PC-3 (cell line): ENCODE measurements at regions of chr14 and their contacts with region 1.

Region 1: GRCh38 chr14:26598081-26598795 is 405 bp upstream of the NOVA1 start:
- DNase-seq: peak; percentile 77
- ATAC-seq: peak; percentile 82
- H3K4me3 ChIP-seq: peak overlapping the region; percentile 86
- H3K27ac ChIP-seq: no peak overlapping the region
- H3K4me1 ChIP-seq: no peaks in the 10 kb centered on the region
- H3K27me3 ChIP-seq: peaks cover 43% of the 10 kb centered on the region
- CTCF ChIP-seq: no peak

Region 2: DNA sequence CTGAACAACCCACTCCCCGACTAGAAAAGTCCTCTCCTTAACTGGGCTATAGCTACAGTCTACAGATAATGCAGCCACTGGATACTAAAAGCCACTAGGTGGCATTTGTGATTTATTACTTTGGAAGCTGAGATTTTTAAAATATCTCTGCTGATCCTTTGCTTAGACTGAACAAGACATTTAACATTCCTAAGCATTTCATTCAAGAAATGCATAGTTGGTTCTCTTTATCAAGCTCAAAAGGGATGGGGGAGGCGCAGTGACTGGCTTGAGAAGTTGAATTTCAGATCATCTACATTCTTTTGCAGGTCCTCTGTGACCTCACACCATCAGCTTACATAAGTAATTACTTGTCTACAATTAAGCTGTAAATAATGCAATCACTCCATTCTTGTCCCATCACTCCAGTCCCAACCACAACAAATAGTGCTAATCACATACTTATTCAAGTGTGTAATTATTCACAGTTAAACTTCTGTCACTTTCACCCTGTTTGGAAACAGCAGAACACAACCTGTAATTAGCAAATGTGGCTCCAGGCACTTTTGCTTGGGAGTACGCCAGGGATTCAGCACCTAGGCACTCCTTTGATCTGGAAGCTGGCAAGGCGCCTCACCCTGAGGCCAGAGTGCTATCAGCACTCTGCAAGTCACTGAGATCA is 204.0 kb before region 1 on chr14:
- CTCF ChIA-PET with region 1: interaction called, 3 read pairs
- POLR2A ChIA-PET with region 1: no interaction called
- intact Hi-C with region 1: loop called (anchors 5 kb)
- DNase-seq: peak; percentile 59
- ATAC-seq: peak; percentile 69
- H3K4me3 ChIP-seq: no peak overlapping the region
- H3K27ac ChIP-seq: no peak overlapping the region
- H3K4me1 ChIP-seq: peaks cover 9% of the 10 kb centered on the region; the same call in 1 of the 2 replicates
- H3K27me3 ChIP-seq: no peaks in the 10 kb centered on the region
- CTCF ChIP-seq: peak; percentile 68

Region 3: GRCh38 chr14:26531894-26532293 is 66.3 kb before region 1 on chr14:
- CTCF ChIA-PET with region 1: no interaction called
- POLR2A ChIA-PET with region 1: no interaction called
- intact Hi-C with region 1: loop called (anchors 5 kb)
- DNase-seq: peak; percentile 76
- ATAC-seq: peak; percentile 95
- H3K4me3 ChIP-seq: no peak overlapping the region
- H3K27ac ChIP-seq: no peak overlapping the region
- H3K4me1 ChIP-seq: peaks cover 12% of the 10 kb centered on the region
- H3K27me3 ChIP-seq: no peaks in the 10 kb centered on the region
- CTCF ChIP-seq: peak; percentile 61

Region 4: GRCh38 chr14:26730929-26731618 is 132.8 kb after region 1 on chr14:
- CTCF ChIA-PET with region 1: no interaction called
- POLR2A ChIA-PET with region 1: no interaction called
- intact Hi-C with region 1: loop called (anchors 2 kb)
- DNase-seq: peak; percentile 41
- ATAC-seq: peak; percentile 70
- H3K4me3 ChIP-seq: no peak overlapping the region
- H3K27ac ChIP-seq: no peak overlapping the region
- H3K4me1 ChIP-seq: no peaks in the 10 kb centered on the region
- H3K27me3 ChIP-seq: no peaks in the 10 kb centered on the region
- CTCF ChIP-seq: peak; percentile 82

Region 5: DNA sequence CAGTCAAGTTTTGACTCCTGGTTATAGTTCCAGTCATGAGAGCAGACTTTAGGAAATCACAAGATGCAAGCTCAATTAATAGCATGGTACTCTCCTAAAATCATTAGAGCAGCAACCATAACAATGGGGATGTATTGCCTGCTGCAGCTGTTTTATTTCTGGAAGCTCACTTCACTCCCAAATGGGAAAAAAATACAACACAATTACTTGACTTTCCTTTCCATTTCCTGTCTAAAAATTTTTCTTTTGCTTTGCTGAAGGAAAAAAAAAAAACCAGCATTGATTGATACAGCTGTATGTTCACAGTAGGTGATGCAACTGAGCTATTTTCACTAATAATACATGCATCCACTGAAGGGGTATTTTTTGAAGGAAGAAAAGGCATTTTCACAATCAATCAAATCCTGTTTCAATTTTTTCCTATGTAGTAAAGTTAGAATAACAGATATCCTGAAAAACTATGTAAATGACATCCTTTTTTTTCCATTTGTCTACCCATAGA is 143.5 kb after region 1 on chr14:
- CTCF ChIA-PET with region 1: no interaction called
- POLR2A ChIA-PET with region 1: no interaction called
- intact Hi-C with region 1: no loop called
- DNase-seq: no peak
- ATAC-seq: no peak
- H3K4me3 ChIP-seq: no peak overlapping the region
- H3K27ac ChIP-seq: no peak overlapping the region
- H3K4me1 ChIP-seq: peaks cover 4% of the 10 kb centered on the region; the same call in 1 of the 2 replicates
- H3K27me3 ChIP-seq: no peaks in the 10 kb centered on the region
- CTCF ChIP-seq: no peak

Region 6: GRCh38 chr14:26984311-26985177 is 386.3 kb after region 1 on chr14:
- CTCF ChIA-PET with region 1: no interaction called
- POLR2A ChIA-PET with region 1: no interaction called
- intact Hi-C with region 1: loop called (anchors 10 kb)
- DNase-seq: peak; percentile 78
- ATAC-seq: peak; percentile 90
- H3K4me3 ChIP-seq: no peak overlapping the region
- H3K27ac ChIP-seq: no peak overlapping the region
- H3K4me1 ChIP-seq: no peaks in the 10 kb centered on the region
- H3K27me3 ChIP-seq: peaks cover 19% of the 10 kb centered on the region
- CTCF ChIP-seq: peak; percentile 93